Activated CD4-positive, alpha-beta T cell treated with anti-CD3 and anti-CD28 coated beads, Interleukin-2, amount 10 ng/mL, durations not matched to agents 24 days and 14 days (primary cell): ENCODE measurements at regions of chr2 and their contacts with region 1.

Region 1: DNA sequence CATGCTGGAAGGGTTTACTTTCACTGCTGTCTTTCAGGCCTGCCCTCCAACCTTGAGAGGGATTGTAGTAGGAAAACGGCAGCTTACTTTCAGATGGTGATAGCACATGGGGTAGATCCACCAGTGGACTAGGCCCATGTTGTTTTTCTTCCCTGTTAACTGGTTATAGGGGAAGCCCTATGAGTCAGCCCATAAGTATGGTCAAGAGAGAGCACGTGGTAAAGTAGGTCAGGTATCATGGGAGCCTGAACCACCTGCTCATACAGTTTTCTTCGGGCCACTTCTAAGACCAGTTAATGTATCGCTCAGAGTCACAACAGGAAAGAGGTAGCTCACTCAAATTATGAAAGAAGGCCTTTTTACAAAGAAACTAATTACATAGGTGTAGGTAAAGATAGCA is 33.0 kb downstream of the PDK1 start:
- DNase-seq: peak; percentile 30
- H3K4me3 Mint-ChIP-seq: no peak overlapping the region
- H3K27ac Mint-ChIP-seq: no peak overlapping the region
- H3K4me1 Mint-ChIP-seq: peaks cover 24% of the 10 kb centered on the region
- H3K27me3 Mint-ChIP-seq: no peaks in the 10 kb centered on the region

Region 2: DNA sequence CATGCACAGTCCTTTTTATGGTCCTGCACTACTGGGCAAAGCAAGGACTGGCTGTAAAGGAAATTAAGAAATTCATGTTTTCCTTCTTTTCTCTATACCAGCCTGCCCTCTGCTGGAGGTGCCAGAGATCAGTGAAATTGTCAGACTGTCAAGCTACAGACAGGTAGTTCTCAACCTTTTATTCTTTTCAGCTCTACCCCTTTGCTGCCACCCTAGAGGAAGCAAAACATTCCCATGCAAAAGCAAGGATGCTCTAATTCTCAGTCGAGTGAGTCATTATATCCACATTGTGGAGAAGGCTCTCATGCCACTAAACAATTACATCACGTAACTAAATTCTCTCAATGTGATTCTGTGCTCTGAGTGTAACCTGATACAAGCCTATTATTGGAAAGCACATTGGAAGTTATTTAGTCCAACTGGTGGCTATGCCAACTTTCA is 121.7 kb after region 1 on chr2:
- intact Hi-C with region 1: loop called (anchors 2 kb)
- DNase-seq: peak; percentile 74
- H3K4me3 Mint-ChIP-seq: no peak overlapping the region
- H3K27ac Mint-ChIP-seq: no peak overlapping the region
- H3K4me1 Mint-ChIP-seq: no peaks in the 10 kb centered on the region
- H3K27me3 Mint-ChIP-seq: peaks cover 21% of the 10 kb centered on the region